Activated B cell treated with CpG ODN at 0.5 μM for 24 hours (primary cell): ENCODE measurements at regions of chr7 and their contacts with region 1.

Region 1: GRCh38 chr7:77798394-77799077 is at the starts of genes PHTF2 and TMEM60:
- DNase-seq: peak; percentile 85
- ATAC-seq: peak; percentile 88
- H3K4me3 Mint-ChIP-seq: peak within 1 kb of the TSS; percentile 98
- H3K27ac Mint-ChIP-seq: peak within 1 kb of the TSS; percentile 91
- H3K4me1 Mint-ChIP-seq: peaks cover 82% of the 10 kb centered on the region
- H3K27me3 Mint-ChIP-seq: no peaks in the 10 kb centered on the region
- CTCF ChIP-seq: no peak
- total RNA-seq, gene PHTF2: 31.4 and 38.9 TPM in 2 replicates
- total RNA-seq, gene TMEM60: 15.3 and 16.3 TPM in 2 replicates

Region 2: DNA sequence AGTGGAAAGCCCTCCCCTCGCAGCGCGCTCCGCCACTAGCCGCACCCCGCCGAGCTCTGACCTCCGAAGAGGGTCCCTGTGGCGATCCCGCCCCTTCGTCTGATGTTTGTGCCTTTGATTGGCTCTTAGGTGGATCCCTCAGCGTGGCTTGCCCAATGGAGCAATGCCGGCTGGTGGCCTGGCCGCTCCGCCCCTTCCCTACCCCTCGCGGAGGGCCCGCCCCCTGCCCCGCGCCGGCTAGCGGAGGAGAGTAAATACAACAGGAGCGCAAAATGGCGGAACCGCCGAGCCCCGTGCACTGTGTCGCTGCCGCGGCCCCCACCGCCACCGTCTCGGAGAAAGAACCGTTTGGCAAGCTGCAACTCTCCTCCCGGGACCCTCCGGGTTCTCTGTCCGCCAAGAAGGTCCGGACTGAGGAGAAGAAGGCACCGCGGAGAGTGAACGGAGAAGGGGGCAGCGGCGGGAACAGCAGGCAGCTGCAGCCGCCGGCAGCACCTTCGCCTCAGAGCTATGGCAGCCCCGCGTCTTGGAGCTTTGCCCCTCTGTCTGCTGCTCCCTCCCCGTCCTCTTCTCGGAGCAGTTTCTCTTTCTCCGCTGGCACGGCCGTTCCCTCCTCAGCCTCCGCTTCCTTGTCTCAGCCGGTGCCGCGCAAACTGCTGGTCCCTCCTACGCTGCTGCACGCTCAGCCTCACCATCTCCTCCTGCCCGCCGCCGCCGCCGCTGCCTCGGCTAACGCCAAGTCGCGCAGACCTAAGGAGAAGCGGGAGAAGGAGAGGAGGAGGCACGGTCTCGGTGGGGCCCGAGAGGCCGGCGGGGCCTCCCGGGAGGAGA is 102.1 kb before region 1 on chr7 and contains the start of gene RSBN1L:
- CTCF ChIA-PET with region 1: interaction called, 4 read pairs
- POLR2A ChIA-PET with region 1: interaction called, 18 read pairs
- intact Hi-C with region 1: loop called (anchors 1 kb)
- DNase-seq: peak; percentile 96
- ATAC-seq: peak; percentile 94
- H3K4me3 Mint-ChIP-seq: peak within 1 kb of the TSS; percentile 96
- H3K27ac Mint-ChIP-seq: peak within 1 kb of the TSS; percentile 93
- H3K4me1 Mint-ChIP-seq: peaks cover 54% of the 10 kb centered on the region
- H3K27me3 Mint-ChIP-seq: no peaks in the 10 kb centered on the region
- CTCF ChIP-seq: no peak
- total RNA-seq, gene RSBN1L: 24.5 and 25.9 TPM in 2 replicates

Region 3: DNA sequence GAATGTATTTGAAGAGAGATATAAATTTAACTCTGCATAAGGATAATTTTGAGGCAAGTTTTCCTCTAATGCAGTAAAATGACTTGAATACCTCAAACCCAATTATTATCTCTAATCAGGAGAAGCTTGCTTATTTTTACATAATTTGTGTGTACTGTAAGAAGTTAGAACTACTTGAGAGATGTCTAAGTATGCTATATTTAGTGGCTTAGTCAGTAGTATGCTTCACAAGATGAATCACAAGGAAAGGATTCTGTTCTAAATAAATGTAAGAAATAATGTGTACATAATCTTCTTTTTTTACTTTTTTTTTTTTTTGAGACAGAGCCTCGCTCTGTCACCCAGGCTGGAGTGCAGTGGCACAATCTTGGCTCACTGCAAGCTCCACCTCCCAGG is 13.8 kb after region 1 on chr7:
- CTCF ChIA-PET with region 1: interaction called, 6 read pairs
- POLR2A ChIA-PET with region 1: interaction called, 8 read pairs
- intact Hi-C with region 1: loop called (anchors 1 kb)
- DNase-seq: no peak
- ATAC-seq: no peak
- H3K4me3 Mint-ChIP-seq: no peak overlapping the region
- H3K27ac Mint-ChIP-seq: peak overlapping the region; percentile 24
- H3K4me1 Mint-ChIP-seq: peaks cover 57% of the 10 kb centered on the region
- H3K27me3 Mint-ChIP-seq: no peaks in the 10 kb centered on the region
- CTCF ChIP-seq: no peak

Region 4: DNA sequence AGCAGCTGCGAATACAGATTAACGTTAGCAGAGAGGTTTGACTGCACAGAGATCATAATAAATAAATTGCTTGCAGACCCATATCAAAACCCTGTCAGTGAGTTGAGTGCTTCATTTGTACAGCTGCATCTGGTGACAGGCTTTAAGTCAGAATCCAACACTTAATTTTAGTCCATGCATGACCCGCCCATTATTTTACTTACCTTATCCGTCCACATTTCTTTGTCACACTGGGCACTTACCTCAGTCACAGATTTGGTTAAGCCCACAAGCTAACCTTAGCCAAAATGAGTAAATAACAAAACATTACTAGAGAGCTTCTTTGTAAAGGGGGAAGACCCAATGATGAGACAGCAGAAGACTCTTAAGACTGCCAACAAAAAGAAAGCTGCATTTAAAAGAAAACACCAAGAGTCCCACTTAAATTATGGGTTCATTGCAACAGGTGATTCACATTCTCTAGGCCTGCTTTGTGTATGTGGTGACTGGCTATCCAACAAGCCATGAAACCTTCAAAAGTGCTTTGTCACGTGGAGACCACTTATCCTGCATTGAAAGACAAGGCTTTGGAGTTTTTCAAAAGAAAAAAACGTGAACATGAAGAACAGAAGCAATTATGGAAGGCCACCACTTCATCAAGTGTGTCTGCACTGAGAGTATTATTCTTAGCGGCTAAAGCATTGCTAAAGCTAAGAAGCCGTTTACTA is 32.3 kb after region 1 on chr7:
- CTCF ChIA-PET with region 1: interaction called, 5 read pairs
- POLR2A ChIA-PET with region 1: interaction called, 29 read pairs
- intact Hi-C with region 1: loop called (anchors 5 kb)
- DNase-seq: no peak
- ATAC-seq: no peak
- H3K4me3 Mint-ChIP-seq: no peak overlapping the region
- H3K27ac Mint-ChIP-seq: peak overlapping the region; percentile 55
- H3K4me1 Mint-ChIP-seq: peaks cover 85% of the 10 kb centered on the region
- H3K27me3 Mint-ChIP-seq: no peaks in the 10 kb centered on the region
- CTCF ChIP-seq: no peak

Region 5: GRCh38 chr7:77855371-77856083 is 57.0 kb after region 1 on chr7:
- CTCF ChIA-PET with region 1: no interaction called
- POLR2A ChIA-PET with region 1: interaction called, 3 read pairs
- intact Hi-C with region 1: loop called (anchors 1 kb)
- DNase-seq: no peak
- ATAC-seq: no peak
- H3K4me3 Mint-ChIP-seq: no peak overlapping the region
- H3K27ac Mint-ChIP-seq: no peak overlapping the region
- H3K4me1 Mint-ChIP-seq: peaks cover 72% of the 10 kb centered on the region
- H3K27me3 Mint-ChIP-seq: no peaks in the 10 kb centered on the region
- CTCF ChIP-seq: no peak

Region 6: GRCh38 chr7:77940647-77941046 is 142.1 kb after region 1 on chr7:
- CTCF ChIA-PET with region 1: interaction called, 10 read pairs
- POLR2A ChIA-PET with region 1: no interaction called
- intact Hi-C with region 1: loop called (anchors 1 kb)
- DNase-seq: no peak
- ATAC-seq: peak; percentile 25
- H3K4me3 Mint-ChIP-seq: no peak overlapping the region
- H3K27ac Mint-ChIP-seq: no peak overlapping the region
- H3K4me1 Mint-ChIP-seq: peaks cover 7% of the 10 kb centered on the region
- H3K27me3 Mint-ChIP-seq: no peaks in the 10 kb centered on the region
- CTCF ChIP-seq: no peak